Caco-2 (cell line): ENCODE measurements at regions of chr2 and their contacts with region 1.

Region 1: GRCh38 chr2:40760071-40760666 is 308.3 kb upstream of the SLC8A1 start:
- DNase-seq: peak; percentile 49 to 56
- H3K4me3 ChIP-seq: no peak overlapping the region
- H3K4me3 Mint-ChIP-seq: no peak overlapping the region
- H3K27ac Mint-ChIP-seq: no peak overlapping the region
- H3K4me1 ChIP-seq: no peaks in the 10 kb centered on the region
- H3K4me1 Mint-ChIP-seq: no peaks in the 10 kb centered on the region
- H3K27me3 ChIP-seq: no peaks in the 10 kb centered on the region
- H3K27me3 Mint-ChIP-seq: no peaks in the 10 kb centered on the region
- CTCF ChIP-seq: peak; percentile 61 to 85

Region 2: DNA sequence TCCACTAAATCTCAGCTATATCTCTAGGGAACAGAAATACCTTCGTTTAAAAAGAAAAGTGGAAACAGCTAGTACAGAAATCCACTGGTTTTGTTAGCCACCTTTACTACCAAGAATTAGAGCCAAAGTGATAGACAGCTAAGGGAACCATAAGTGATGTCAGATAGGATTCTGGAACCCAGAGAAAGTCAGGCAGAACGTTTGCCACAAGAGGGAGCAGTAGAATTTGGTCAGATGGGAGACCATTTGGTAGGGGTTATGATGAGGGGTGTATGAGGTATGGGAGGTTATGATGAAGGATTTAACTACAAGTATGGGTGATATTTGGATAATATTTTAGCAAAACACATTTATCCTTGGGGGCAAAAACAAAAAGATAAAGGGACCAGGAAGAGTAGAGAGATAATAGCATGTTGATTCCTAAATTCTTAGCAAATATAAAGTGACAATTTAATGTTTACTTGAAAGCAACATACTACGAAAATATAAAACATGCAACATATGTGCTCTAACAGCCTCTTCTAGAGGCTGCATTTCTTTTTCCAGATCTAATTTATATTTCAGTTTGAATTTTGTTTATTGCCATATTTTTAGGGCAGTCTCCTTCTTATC is 311.6 kb before region 1 on chr2:
- CTCF ChIA-PET with region 1: no interaction called
- POLR2A ChIA-PET with region 1: no interaction called
- intact Hi-C with region 1: loop called (anchors 1 kb)
- DNase-seq: peak in 1 of 2 experiments; percentile 37
- H3K4me3 ChIP-seq: no peak overlapping the region
- H3K4me3 Mint-ChIP-seq: no peak overlapping the region
- H3K27ac Mint-ChIP-seq: no peak overlapping the region
- H3K4me1 ChIP-seq: no peaks in the 10 kb centered on the region
- H3K4me1 Mint-ChIP-seq: no peaks in the 10 kb centered on the region
- H3K27me3 ChIP-seq: no peaks in the 10 kb centered on the region
- H3K27me3 Mint-ChIP-seq: peaks cover 14% of the 10 kb centered on the region
- CTCF ChIP-seq: peak in 1 of 2 experiments; percentile 51

Region 3: DNA sequence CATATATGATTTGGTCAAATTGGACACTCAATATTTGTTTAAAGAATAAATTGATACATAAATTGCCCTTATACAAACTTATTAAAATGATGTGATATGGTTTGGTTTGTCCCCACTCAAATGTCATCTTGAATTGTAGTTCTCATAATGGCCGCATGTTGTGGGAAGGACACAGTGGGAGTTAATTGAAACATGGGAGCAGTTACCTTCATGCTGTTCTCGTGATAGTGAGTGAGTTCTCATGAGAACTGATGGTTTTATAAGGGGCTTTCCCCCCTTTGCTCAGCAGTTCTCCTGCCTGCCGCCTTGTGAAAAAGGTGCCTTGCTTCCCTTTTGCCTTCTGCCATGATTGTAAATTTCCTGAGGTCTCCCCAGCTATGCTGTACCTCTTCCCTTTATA is 274.3 kb before region 1 on chr2:
- CTCF ChIA-PET with region 1: no interaction called
- POLR2A ChIA-PET with region 1: no interaction called
- intact Hi-C with region 1: loop called (anchors 1 kb)
- DNase-seq: no peak
- H3K4me3 ChIP-seq: no peak overlapping the region
- H3K4me3 Mint-ChIP-seq: no peak overlapping the region
- H3K27ac Mint-ChIP-seq: no peak overlapping the region
- H3K4me1 ChIP-seq: no peaks in the 10 kb centered on the region
- H3K4me1 Mint-ChIP-seq: no peaks in the 10 kb centered on the region
- H3K27me3 ChIP-seq: no peaks in the 10 kb centered on the region
- H3K27me3 Mint-ChIP-seq: peaks cover 3% of the 10 kb centered on the region
- CTCF ChIP-seq: no peak